ENCODE measurements at regions of chr2 and their contacts with region 1.

Region 1: DNA sequence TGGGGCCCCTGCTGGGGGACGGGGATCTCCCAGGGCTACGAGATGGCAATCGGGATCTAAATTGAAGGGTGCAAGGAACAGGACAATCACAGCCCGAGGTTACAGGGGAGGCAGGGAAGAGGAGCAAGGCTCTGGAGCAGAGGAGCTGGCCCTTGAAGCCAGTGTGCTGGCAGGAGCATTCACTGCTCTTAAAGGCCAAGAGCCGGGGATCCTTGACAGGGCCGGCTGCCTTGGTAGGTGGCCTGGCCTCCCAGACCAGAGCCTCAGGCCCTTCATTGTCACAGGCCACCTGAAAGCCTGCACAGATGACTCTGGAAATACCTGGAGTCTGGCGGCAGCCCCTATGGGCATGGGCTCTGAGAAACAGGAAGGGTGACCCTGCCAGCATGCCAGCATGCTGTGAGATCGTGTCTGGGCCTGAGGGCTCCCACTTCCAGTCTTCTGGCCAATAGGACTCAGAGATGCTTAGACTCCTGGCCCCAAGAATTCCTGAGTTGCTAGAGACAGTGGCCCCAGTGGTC is 38.7 kb downstream of the PDIA6 start:
- DNase-seq: peak; percentile 49
- H3K4me3 ChIP-seq: no peak overlapping the region
- H3K27ac ChIP-seq: no peak overlapping the region
- H3K4me1 ChIP-seq: peaks cover 18% of the 10 kb centered on the region
- H3K27me3 ChIP-seq: no peaks in the 10 kb centered on the region
- CTCF ChIP-seq: no peak

Region 2: GRCh38 chr2:10501451-10501961 is 272.4 kb before region 1 on chr2:
- CTCF ChIA-PET with region 1: no interaction called
- dilution Hi-C with region 1: no loop called
- in situ Hi-C with region 1: no loop called
- intact Hi-C with region 1: no loop called
- DNase-seq: no peak
- H3K4me3 ChIP-seq: no peak overlapping the region
- H3K27ac ChIP-seq: no peak overlapping the region
- H3K4me1 ChIP-seq: peaks cover 26% of the 10 kb centered on the region
- H3K27me3 ChIP-seq: peaks cover 3% of the 10 kb centered on the region
- CTCF ChIP-seq: no peak

Region 3: GRCh38 chr2:10709290-10709939 is 64.5 kb before region 1 on chr2:
- CTCF ChIA-PET with region 1: no interaction called
- dilution Hi-C with region 1: loop called (anchors 5 kb)
- in situ Hi-C with region 1: no loop called
- intact Hi-C with region 1: loop called (anchors 10 kb)
- DNase-seq: peak; percentile 44
- H3K4me3 ChIP-seq: no peak overlapping the region
- H3K27ac ChIP-seq: no peak overlapping the region
- H3K4me1 ChIP-seq: peaks cover 6% of the 10 kb centered on the region
- H3K27me3 ChIP-seq: no peaks in the 10 kb centered on the region
- CTCF ChIP-seq: peak; percentile 64 to 83

Region 4: GRCh38 chr2:10717613-10718012 is 56.3 kb before region 1 on chr2:
- CTCF ChIA-PET with region 1: no interaction called
- dilution Hi-C with region 1: no loop called
- in situ Hi-C with region 1: no loop called
- intact Hi-C with region 1: loop called (anchors 10 kb)
- DNase-seq: peak; percentile 85
- H3K4me3 ChIP-seq: no peak overlapping the region
- H3K27ac ChIP-seq: no peak overlapping the region
- H3K4me1 ChIP-seq: peaks cover 35% of the 10 kb centered on the region
- H3K27me3 ChIP-seq: peaks cover 19% of the 10 kb centered on the region
- CTCF ChIP-seq: no peak

Region 5: DNA sequence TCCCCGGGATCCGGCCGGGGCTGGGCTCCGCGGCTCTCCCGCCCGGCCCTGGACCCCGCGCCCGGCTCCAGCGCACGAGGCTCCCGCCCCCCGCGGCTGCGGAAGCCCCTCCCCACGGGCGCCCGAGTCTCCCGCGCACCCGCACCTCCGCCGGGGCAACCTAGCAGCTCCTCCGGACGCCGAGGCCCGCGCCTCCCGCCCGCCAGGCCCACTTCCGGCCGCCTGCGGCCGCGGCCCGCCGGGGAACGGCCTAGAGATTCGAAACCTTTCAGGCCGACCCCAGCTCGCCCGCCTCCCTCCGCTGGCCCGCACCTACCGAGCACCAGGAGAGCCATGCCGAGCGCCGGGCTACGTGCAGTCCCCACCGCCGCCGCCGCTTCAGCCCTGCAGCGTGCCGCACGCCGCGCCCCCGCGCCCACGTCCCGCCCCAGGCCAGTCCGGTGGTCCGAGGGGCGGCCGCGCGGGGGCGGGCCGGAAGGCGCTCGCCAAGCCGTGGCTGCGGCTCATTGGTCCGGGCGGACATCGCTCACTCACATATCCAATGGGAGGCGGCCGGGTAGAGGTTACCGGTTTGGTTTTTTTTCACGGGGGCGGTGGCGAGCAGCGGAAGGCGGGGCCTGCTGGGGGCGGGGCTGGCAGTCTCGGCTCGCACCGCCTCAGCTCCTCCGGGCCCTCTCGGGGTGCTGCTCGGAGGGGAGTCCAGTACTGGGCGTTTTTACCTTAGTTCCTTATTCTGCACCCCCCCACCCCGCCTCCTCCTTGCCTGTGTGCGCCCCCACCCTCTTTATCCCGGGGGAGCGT is 38.7 kb after region 1 on chr2 and contains the start of gene PDIA6:
- CTCF ChIA-PET with region 1: no interaction called
- dilution Hi-C with region 1: no loop called
- in situ Hi-C with region 1: no loop called
- intact Hi-C with region 1: loop called (anchors 1 kb)
- DNase-seq: peak; percentile 95
- H3K4me3 ChIP-seq: peak within 1 kb of the TSS; percentile 63 to 76 (median 67)
- H3K27ac ChIP-seq: peak within 1 kb of the TSS; percentile 66
- H3K4me1 ChIP-seq: peaks cover 14% of the 10 kb centered on the region
- H3K27me3 ChIP-seq: no peaks in the 10 kb centered on the region
- CTCF ChIP-seq: no peak
- total RNA-seq, gene PDIA6: 168 to 256 TPM

Region 6: GRCh38 chr2:10864861-10865636 is 91.2 kb after region 1 on chr2:
- CTCF ChIA-PET with region 1: no interaction called
- dilution Hi-C with region 1: no loop called
- in situ Hi-C with region 1: no loop called
- intact Hi-C with region 1: no loop called
- DNase-seq: no peak
- H3K4me3 ChIP-seq: no peak overlapping the region
- H3K27ac ChIP-seq: no peak overlapping the region
- H3K4me1 ChIP-seq: peaks cover 11% of the 10 kb centered on the region
- H3K27me3 ChIP-seq: no peaks in the 10 kb centered on the region
- CTCF ChIP-seq: peak in 1 of 2 donors; percentile 23

Region 7: GRCh38 chr2:10875126-10875525 is 101.2 kb after region 1 on chr2:
- CTCF ChIA-PET with region 1: no interaction called
- dilution Hi-C with region 1: no loop called
- in situ Hi-C with region 1: no loop called
- intact Hi-C with region 1: no loop called
- DNase-seq: no peak
- H3K4me3 ChIP-seq: no peak overlapping the region
- H3K27ac ChIP-seq: no peak overlapping the region
- H3K4me1 ChIP-seq: no peaks in the 10 kb centered on the region
- H3K27me3 ChIP-seq: no peaks in the 10 kb centered on the region
- CTCF ChIP-seq: no peak

Region 8: DNA sequence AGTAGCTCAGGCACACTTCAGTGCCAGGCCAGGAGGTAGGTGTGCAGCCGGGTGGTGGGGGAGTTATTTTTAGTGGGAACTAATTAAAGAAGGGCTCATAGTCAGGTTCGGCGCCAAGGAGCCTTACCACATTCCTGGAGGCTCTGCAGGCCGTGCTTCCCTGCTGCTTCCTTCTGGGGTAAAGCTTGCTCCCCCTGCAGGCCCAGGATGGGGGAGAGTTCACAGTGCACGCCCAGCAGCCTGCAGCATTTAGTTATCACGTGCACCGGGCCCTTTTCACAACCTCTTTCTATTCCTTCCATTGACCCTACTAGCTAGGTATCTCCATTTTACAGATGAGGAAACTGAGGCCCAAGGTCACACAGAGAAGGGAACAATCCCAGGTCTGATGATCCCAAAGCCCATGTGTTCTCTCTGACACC is 140.4 kb after region 1 on chr2:
- CTCF ChIA-PET with region 1: no interaction called
- dilution Hi-C with region 1: no loop called
- in situ Hi-C with region 1: no loop called
- intact Hi-C with region 1: no loop called
- DNase-seq: no peak
- H3K4me3 ChIP-seq: no peak overlapping the region
- H3K27ac ChIP-seq: no peak overlapping the region
- H3K4me1 ChIP-seq: no peaks in the 10 kb centered on the region
- H3K27me3 ChIP-seq: peaks cover 9% of the 10 kb centered on the region
- CTCF ChIP-seq: peak in 1 of 2 donors; percentile 15